MCF 10A (cell line): ENCODE measurements at regions of chr2 and their contacts with region 1.

Region 1: DNA sequence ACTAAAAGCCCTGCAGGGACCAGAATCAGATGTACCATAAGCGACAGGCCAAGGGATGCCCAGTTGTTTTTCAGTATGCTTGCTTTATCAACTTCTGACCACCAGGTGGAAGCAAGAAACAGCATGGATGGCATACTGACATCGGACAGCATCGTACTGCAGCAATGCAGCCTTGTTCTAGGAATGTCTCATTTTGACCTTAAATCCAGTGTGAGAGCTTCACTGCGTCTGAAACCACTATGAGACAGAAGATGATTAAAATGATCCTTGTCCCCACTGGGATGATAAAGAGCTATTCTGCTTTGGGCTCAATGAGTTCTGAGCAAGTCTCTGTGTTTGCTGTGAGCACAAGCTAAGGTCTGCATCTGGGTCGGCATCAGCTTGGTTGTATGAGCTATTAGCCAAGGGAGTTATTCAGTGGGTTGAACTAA is 54.3 kb downstream of the CDK15 start:
- DNase-seq: peak; percentile 77
- H3K4me3 Mint-ChIP-seq: no peak overlapping the region
- H3K27ac Mint-ChIP-seq: no peak overlapping the region
- H3K4me1 Mint-ChIP-seq: peaks cover 5% of the 10 kb centered on the region
- H3K27me3 Mint-ChIP-seq: no peaks in the 10 kb centered on the region
- CTCF ChIP-seq: peak; percentile 71

Region 2: DNA sequence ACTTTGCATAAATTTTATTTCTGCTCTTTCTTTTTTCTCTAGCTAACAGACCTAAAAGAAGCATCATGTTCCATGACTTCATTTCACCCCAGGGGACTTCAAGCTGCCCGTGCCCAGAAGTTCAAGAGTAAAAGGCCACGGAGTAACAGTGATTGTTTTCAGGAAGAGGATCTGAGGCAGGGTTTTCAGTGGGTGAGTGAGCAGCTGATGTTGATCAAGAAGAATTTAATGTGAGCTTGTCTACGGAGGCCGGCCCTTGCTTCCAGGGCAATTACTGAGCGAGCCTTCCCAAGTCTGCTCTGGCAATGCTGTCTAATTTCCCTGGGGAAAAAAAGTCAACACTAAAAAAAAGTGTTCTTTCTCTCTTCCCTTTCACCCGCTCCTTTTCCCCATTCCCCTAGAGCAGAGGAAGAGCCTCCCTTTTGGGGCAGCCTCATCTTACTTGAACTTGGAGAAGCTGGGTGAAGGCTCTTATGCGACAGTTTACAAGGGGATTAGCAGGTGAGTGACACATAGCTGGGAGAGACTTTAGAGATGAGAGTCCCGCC is 53.1 kb before region 1 on chr2:
- CTCF ChIA-PET with region 1: interaction called, 10 read pairs
- POLR2A ChIA-PET with region 1: interaction called, 4 read pairs
- intact Hi-C with region 1: no loop called
- DNase-seq: no peak
- H3K4me3 Mint-ChIP-seq: no peak overlapping the region
- H3K27ac Mint-ChIP-seq: no peak overlapping the region
- H3K4me1 Mint-ChIP-seq: no peaks in the 10 kb centered on the region
- H3K27me3 Mint-ChIP-seq: no peaks in the 10 kb centered on the region
- CTCF ChIP-seq: no peak

Region 3: GRCh38 chr2:201886504-201886903 is 25.9 kb after region 1 on chr2:
- CTCF ChIA-PET with region 1: interaction called, 20 read pairs
- POLR2A ChIA-PET with region 1: no interaction called
- intact Hi-C with region 1: no loop called
- DNase-seq: peak; percentile 81
- H3K4me3 Mint-ChIP-seq: no peak overlapping the region
- H3K27ac Mint-ChIP-seq: no peak overlapping the region
- H3K4me1 Mint-ChIP-seq: peaks cover 22% of the 10 kb centered on the region
- H3K27me3 Mint-ChIP-seq: peaks cover 15% of the 10 kb centered on the region
- CTCF ChIP-seq: no peak

Region 4: GRCh38 chr2:202056392-202057010 is 195.8 kb after region 1 on chr2:
- CTCF ChIA-PET with region 1: interaction called, 30 read pairs
- POLR2A ChIA-PET with region 1: no interaction called
- intact Hi-C with region 1: loop called (anchors 1 kb)
- DNase-seq: peak; percentile 17
- H3K4me3 Mint-ChIP-seq: no peak overlapping the region
- H3K27ac Mint-ChIP-seq: no peak overlapping the region
- H3K4me1 Mint-ChIP-seq: no peaks in the 10 kb centered on the region
- H3K27me3 Mint-ChIP-seq: peaks cover 65% of the 10 kb centered on the region
- CTCF ChIP-seq: peak; percentile 27

Region 5: DNA sequence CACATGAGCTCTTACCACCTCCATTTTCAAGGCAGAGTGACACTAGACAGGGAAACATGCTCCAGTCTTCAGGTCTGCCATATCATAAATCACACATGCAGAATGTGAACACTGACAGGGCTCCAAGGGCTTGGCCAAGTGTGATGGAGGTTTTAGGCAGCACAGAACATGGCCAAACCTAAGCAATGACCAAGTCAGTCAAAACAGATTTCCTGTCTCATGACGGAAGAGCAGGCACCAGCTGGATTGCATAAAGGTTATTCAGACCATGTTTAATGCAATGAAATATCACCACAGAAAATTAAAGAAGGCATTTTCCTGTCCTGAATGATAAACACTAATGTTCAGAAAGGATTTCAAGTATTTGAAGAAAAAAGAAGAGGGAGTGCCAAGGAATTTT is 305.3 kb after region 1 on chr2:
- CTCF ChIA-PET with region 1: interaction called, 22 read pairs
- POLR2A ChIA-PET with region 1: no interaction called
- intact Hi-C with region 1: no loop called
- DNase-seq: no peak
- H3K4me3 Mint-ChIP-seq: no peak overlapping the region
- H3K27ac Mint-ChIP-seq: no peak overlapping the region
- H3K4me1 Mint-ChIP-seq: no peaks in the 10 kb centered on the region
- H3K27me3 Mint-ChIP-seq: no peaks in the 10 kb centered on the region
- CTCF ChIP-seq: no peak